Vagina (tissue), 2 donors: ENCODE measurements at regions of chr9 and their contacts with region 1.

Region 1: DNA sequence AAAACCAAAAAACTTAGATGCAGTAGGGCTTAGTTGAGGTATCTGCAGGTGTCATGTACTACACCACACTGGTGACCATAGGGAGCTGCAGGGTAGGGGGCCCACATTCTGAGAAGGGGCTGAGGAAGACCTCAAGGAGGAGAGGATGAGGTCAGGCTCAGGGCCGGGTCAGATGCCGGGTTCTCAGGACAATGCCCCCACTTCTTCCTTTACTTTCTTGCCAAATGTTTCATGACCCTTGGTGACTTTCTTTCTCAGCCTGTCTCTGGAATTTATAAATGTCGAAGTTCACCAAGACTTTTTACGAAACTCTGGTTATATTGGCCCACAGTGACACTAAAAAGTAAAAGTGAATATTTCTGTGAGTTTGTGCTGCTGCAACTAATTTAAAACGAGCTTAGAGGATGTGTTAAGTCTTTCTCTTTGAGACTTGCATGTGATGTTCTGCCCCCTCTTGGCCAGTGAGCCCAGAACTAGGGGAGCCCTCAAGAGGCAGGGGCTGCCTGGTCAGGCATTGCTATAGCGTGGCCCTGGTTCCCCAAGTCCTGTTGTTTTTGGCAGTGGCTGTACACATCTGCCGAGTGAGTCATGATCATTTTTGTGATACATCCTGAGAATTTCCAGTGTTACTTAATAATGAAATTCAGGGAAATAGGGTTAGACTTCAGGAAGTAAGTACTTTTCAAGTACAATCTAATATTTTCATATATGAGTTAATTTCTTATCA is 11.2 kb downstream of the ACO1 start:
- DNase-seq: no peak
- H3K4me3 ChIP-seq: no peak overlapping the region
- H3K27ac ChIP-seq: peak overlapping the region; percentile 69
- H3K4me1 ChIP-seq: peaks cover 34% of the 10 kb centered on the region
- H3K27me3 ChIP-seq: no peaks in the 10 kb centered on the region
- CTCF ChIP-seq: no peak
- POLR2A ChIP-seq: no peak

Region 2: GRCh38 chr9:32234451-32234850 is 161.2 kb before region 1 on chr9:
- intact Hi-C with region 1: no loop called
- DNase-seq: no peak
- H3K4me3 ChIP-seq: no peak overlapping the region
- H3K27ac ChIP-seq: no peak overlapping the region
- H3K4me1 ChIP-seq: no peaks in the 10 kb centered on the region
- H3K27me3 ChIP-seq: no peaks in the 10 kb centered on the region
- CTCF ChIP-seq: no peak
- POLR2A ChIP-seq: no peak

Region 3: GRCh38 chr9:33187519-33188218 is 792.0 kb after region 1 on chr9:
- intact Hi-C with region 1: loop called (anchors 10 kb)
- DNase-seq: no peak
- H3K4me3 ChIP-seq: no peak overlapping the region
- H3K27ac ChIP-seq: peak overlapping the region; percentile 63
- H3K4me1 ChIP-seq: peaks cover 56% of the 10 kb centered on the region
- H3K27me3 ChIP-seq: no peaks in the 10 kb centered on the region
- CTCF ChIP-seq: no peak
- POLR2A ChIP-seq: no peak